Activated CD8-positive, alpha-beta T cell treated with anti-CD3 and anti-CD28 coated beads for 36 hours (primary cell): ENCODE measurements at regions of chr2 and their contacts with region 1.

Region 1: GRCh38 chr2:127675331-127676261 is at the start of gene LIMS2:
- DNase-seq: no peak
- ATAC-seq: no peak
- H3K4me3 Mint-ChIP-seq: peak within 1 kb of the TSS; percentile 57
- H3K27ac Mint-ChIP-seq: no peak within 1 kb of the TSS
- H3K4me1 Mint-ChIP-seq: peaks cover 6% of the 10 kb centered on the region
- H3K27me3 Mint-ChIP-seq: peaks cover 42% of the 10 kb centered on the region
- CTCF ChIP-seq: no peak
- total RNA-seq, gene LIMS2: 22.1 to 23.6 TPM

Region 2: GRCh38 chr2:127637725-127638252 is 37.8 kb before region 1 on chr2:
- CTCF ChIA-PET with region 1: no interaction called
- POLR2A ChIA-PET with region 1: no interaction called
- intact Hi-C with region 1: no loop called
- DNase-seq: no peak
- ATAC-seq: no peak
- H3K4me3 Mint-ChIP-seq: peak overlapping the region; percentile 15
- H3K27ac Mint-ChIP-seq: peak overlapping the region; percentile 75
- H3K4me1 Mint-ChIP-seq: peaks cover 63% of the 10 kb centered on the region
- H3K27me3 Mint-ChIP-seq: no peaks in the 10 kb centered on the region
- CTCF ChIP-seq: no peak

Region 3: DNA sequence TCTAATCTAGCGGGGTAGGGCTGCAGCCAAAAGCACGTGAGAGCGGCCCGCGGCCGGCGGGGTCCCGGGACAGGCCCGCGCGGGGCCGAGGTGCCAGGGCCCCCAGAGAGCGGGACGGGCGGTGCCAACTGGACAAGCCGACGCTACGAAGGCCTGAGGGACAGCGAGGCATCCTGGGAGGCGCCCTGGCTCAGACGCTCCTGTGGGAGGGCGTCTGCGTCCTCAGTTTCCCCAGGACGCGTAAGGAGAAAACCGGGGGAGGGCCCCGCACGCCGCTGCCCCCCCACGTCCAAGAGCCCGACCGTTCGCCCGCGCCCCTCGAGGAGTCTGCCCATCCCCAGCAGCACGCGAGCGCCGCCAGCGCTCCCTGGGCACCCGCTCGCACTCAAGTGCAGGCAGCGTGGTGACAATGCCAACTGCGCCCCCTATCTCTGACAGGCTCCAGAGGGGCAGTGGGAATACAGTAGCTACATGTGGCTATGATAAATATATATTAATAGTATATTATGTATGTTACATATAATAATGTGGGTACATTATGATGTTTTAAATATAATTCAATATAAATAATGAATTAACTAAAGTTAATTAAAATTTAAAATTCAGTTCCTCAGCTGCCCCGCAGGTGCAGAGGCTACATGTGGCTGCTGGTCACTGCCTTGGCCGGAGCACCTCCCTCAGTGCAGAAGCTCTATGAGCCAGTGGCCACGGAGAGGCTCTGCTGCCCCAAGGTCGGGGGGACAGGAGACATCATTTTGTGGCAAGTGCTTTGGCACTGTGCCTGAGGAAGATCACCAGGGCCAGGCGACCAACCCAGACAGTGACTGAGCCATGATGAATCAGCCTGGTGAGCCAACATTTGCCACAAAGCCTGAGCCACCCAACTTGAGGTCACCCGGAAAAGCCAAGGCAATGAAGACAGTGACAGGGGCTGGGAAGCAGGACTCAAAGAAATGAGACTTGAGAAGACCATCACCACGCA is 20.2 kb after region 1 on chr2:
- CTCF ChIA-PET with region 1: interaction called, 11 read pairs
- POLR2A ChIA-PET with region 1: interaction called, 3 read pairs
- intact Hi-C with region 1: no loop called
- DNase-seq: peak; percentile 78
- ATAC-seq: peak; percentile 93
- H3K4me3 Mint-ChIP-seq: no peak overlapping the region
- H3K27ac Mint-ChIP-seq: no peak overlapping the region
- H3K4me1 Mint-ChIP-seq: peaks cover 7% of the 10 kb centered on the region
- H3K27me3 Mint-ChIP-seq: no peaks in the 10 kb centered on the region
- CTCF ChIP-seq: peak; percentile 75

Region 4: DNA sequence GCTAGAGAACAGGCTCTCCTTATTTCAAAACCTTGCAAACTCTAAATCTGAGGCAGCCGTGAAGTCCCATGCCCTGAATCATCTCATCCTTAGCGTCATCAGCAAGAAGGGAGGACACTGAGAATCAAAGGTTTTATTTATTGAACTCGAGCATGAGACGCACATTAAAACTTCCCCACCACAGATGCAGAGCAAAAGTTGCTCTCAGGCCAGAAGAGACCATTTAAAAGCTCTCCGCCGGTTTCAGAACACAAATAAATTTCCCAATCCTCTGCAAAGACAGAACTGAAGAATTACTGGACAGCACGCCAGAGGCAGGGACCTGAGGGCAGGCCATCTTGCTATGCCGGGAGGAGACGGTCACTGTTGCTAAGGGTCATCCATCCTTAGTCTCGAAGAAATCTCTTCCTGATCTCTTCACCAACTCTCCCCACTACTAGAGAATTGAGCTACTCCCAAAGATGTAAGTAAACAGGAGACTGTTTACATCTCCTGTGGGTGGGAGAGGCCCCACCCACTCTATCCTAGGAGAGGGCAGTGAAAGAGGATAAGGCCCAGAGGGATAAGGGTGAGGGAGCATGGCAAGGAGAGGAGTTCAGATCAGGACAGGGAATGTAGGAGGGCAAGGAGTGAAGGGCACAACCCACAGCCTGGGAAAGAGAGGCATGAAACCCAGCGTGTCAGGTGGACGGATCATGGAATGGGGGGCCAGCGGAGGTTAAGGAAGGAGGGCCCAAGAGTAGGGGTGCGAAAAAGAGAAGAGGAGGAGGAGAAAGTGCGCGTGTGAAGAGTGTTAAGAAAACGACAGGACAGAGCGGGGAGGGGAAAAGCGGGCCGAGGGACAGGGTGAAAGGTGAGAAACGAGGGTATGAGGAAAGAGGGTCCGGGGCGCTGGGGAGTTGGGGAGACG is 209.1 kb after region 1 on chr2:
- CTCF ChIA-PET with region 1: no interaction called
- POLR2A ChIA-PET with region 1: no interaction called
- intact Hi-C with region 1: no loop called
- DNase-seq: no peak
- ATAC-seq: no peak
- H3K4me3 Mint-ChIP-seq: peak overlapping the region; percentile 81
- H3K27ac Mint-ChIP-seq: peak overlapping the region; percentile 75
- H3K4me1 Mint-ChIP-seq: peaks cover 55% of the 10 kb centered on the region
- H3K27me3 Mint-ChIP-seq: no peaks in the 10 kb centered on the region
- CTCF ChIP-seq: no peak